Activated naive CD4-positive, alpha-beta T cell treated with anti-CD3 and anti-CD28 coated beads for 36 hours (primary cell): ENCODE measurements at regions of chr7 and their contacts with region 1.

Region 1: DNA sequence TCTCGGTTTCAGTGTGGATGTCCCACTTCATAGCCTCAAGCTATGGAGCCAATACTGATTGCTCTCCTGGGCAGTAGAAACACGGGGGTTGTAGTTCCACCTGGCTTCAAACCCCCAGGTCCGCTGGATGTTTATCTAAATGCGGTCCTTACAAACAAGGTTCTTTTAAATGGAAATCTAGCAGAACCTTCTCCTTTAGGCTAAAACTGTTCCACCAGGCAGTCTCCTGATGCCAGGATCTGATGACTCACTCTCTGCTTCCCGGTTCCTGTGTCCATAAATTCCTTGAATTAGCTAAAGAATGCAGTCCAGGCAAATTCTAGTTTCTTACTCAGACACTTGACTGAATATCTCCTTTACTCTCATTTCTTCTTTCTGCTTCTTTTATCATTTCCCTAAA is 108.4 kb upstream of the FAM3C start:
- DNase-seq: no peak
- H3K4me3 Mint-ChIP-seq: no peak overlapping the region
- H3K27ac Mint-ChIP-seq: no peak overlapping the region
- H3K4me1 Mint-ChIP-seq: peaks cover 14% of the 10 kb centered on the region
- H3K27me3 Mint-ChIP-seq: peaks cover 7% of the 10 kb centered on the region

Region 2: DNA sequence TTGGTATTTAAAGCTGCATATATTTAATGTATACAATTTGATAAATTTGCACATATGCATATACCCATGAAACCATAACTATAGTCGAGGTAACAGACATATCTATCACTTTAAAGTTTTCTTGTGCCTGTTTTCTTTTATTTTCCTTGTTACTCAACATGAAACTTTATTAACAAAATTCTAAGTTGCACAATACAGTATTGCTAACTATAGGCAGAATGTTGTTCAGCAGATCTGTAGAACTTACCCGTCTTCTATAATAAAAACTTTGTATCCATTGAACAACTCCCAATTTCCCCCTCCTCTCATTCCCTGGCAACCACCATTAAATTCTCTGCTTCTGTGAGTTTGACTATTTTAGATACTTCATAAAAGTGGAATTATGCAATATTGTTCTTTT is 1636.1 kb before region 1 on chr7:
- CTCF ChIA-PET with region 1: no interaction called
- intact Hi-C with region 1: no loop called
- DNase-seq: no peak
- H3K4me3 Mint-ChIP-seq: no peak overlapping the region
- H3K27ac Mint-ChIP-seq: no peak overlapping the region
- H3K4me1 Mint-ChIP-seq: no peaks in the 10 kb centered on the region
- H3K27me3 Mint-ChIP-seq: no peaks in the 10 kb centered on the region

Region 3: GRCh38 chr7:121385800-121386179 is 118.7 kb before region 1 on chr7:
- CTCF ChIA-PET with region 1: no interaction called
- intact Hi-C with region 1: loop called (anchors 5 kb)
- DNase-seq: no peak
- H3K4me3 Mint-ChIP-seq: no peak overlapping the region
- H3K27ac Mint-ChIP-seq: no peak overlapping the region
- H3K4me1 Mint-ChIP-seq: peaks cover 67% of the 10 kb centered on the region
- H3K27me3 Mint-ChIP-seq: no peaks in the 10 kb centered on the region

Region 4: GRCh38 chr7:121437456-121438127 is 66.9 kb before region 1 on chr7:
- CTCF ChIA-PET with region 1: no interaction called
- intact Hi-C with region 1: loop called (anchors 1 kb)
- DNase-seq: no peak
- H3K4me3 Mint-ChIP-seq: no peak overlapping the region
- H3K27ac Mint-ChIP-seq: no peak overlapping the region
- H3K4me1 Mint-ChIP-seq: peaks cover 22% of the 10 kb centered on the region
- H3K27me3 Mint-ChIP-seq: no peaks in the 10 kb centered on the region

Region 5: DNA sequence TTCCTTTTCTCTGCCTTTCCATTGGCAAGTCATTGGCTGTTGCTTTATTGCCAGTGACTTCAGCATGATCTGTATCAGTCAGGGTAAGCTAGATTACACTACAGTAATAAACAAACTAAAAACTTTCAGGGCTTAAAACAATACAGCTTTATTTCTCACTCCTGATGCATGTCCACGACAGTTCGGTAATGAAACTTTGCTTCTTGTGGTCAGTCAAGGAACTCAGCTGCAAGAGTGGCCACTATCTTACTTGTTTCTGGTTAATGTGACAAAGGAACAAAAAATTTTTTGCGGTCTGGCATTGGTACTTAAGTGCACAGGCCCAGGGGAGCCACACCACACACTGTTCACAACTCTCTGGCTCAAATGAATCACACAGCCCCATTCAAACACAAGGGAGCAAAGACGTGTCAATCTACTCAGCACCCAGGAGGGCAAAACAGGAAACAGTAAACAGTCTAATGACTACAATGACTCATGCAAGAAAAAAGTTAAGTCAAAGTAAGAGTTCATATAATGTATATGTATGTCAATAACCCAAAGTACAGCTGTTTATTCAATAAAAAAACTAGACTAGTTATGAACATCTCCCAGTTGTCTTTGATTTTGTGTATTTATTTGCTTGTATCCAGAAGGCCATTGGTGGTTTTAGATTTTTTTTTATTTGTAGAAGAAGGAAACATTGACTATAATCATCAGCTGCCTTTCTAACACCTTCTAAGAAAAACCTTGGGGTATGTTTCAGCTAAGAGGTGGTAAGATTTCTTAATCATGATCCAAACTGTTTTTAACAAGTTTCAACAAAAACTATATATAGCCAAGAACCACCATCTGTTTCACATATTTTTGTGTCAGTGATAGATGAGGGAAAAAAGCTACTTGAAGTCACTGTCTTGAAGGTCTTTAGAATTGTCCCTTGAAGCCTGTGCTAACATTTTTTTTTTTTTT is 26.0 kb after region 1 on chr7:
- CTCF ChIA-PET with region 1: no interaction called
- intact Hi-C with region 1: loop called (anchors 1 kb)
- DNase-seq: peak; percentile 46
- H3K4me3 Mint-ChIP-seq: no peak overlapping the region
- H3K27ac Mint-ChIP-seq: peak overlapping the region; percentile 62
- H3K4me1 Mint-ChIP-seq: peaks cover 17% of the 10 kb centered on the region
- H3K27me3 Mint-ChIP-seq: no peaks in the 10 kb centered on the region